KBM-7 (cell line): ENCODE measurements at regions of chr2 and their contacts with region 1.

Region 1: GRCh38 chr2:182666674-182667314 is 49.3 kb upstream of the DNAJC10 start:
- DNase-seq: peak; percentile 43

Region 2: DNA sequence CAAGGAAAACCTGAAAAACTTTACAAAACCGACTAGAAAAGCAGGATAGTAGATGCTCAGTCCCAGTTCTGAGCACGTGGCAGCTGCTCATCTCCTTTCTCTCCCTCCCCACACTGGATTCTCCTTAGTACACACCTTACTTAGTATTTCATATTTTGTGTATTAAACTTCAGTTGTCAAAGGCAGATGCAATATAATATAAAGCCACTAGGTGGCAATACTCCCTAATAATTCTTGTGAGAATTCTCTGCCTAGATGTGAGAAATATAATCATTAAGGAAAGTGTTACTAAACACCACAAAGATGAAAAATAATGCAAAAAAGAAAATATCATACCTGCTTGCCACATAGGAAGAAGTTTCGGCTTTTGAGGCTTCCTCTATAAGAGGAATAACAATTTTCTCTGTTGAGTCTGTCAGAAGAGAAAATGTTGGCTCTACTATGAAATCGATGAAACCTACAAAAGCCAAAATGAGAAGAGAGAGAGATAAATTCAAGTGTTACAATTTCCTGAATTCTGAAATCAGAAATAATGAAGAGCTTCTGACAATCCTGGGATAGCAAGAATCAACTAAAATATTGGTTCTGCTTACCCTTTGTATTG is 480.6 kb before region 1 on chr2:
- in situ Hi-C with region 1: loop called (anchors 25 kb)
- DNase-seq: peak; percentile 58